Caco-2 (cell line): ENCODE measurements at regions of chr13 and their contacts with region 1.

Region 1: GRCh38 chr13:46595136-46595886 is 42.3 kb downstream of the LRCH1 start:
- DNase-seq: no peak
- H3K4me3 ChIP-seq: no peak overlapping the region
- H3K4me3 Mint-ChIP-seq: no peak overlapping the region
- H3K27ac Mint-ChIP-seq: peak overlapping the region; percentile 48
- H3K4me1 ChIP-seq: peaks cover 72% of the 10 kb centered on the region
- H3K4me1 Mint-ChIP-seq: peaks cover 64% of the 10 kb centered on the region
- H3K27me3 ChIP-seq: no peaks in the 10 kb centered on the region
- H3K27me3 Mint-ChIP-seq: no peaks in the 10 kb centered on the region
- CTCF ChIP-seq: no peak

Region 2: DNA sequence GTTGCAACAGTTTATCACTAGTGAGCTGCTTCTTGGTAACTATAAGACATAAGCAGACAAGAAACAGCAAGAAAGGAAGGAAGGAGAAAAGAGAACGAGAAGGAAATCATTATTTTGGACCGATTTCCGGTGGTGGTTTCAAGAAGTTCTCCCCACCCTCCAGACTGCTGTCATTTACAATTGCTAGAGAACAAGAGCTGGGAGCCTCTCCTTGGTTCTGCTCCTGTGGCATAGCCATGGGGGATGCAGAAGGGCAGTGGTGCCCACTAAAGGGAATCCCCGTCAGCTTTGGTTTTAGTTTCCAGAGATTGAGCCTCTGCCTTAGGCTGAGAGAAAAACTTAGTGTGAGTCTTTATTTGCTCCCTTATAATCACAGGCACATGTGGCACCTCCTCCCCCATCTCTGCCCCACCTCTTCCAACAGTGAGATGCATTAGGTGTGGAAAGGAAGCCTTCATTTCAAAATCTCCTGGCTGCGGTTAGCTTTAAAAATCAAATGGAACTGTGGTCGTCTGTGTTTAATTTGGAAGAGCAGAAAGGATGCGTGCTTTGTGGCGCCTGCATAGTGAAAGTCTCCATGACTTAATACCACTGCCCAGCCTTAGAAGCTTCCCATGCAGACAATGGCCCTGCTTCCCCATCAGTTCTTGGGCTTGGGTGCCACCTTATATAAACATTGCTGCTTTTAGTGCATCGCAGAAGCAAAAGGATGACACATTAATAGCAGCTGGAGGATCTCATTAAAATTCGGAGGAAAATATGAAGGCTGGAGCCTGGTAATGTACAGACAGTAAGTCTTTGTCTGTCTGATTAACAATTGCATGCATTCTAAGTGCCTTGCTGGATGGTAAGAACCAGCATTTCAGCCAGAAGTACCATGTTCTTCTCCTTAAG is 17.4 kb before region 1 on chr13:
- CTCF ChIA-PET with region 1: interaction called, 3 read pairs
- POLR2A ChIA-PET with region 1: interaction called, 12 read pairs
- intact Hi-C with region 1: no loop called
- DNase-seq: no peak
- H3K4me3 ChIP-seq: no peak overlapping the region
- H3K4me3 Mint-ChIP-seq: no peak overlapping the region
- H3K27ac Mint-ChIP-seq: no peak overlapping the region
- H3K4me1 ChIP-seq: peaks cover 41% of the 10 kb centered on the region
- H3K4me1 Mint-ChIP-seq: peaks cover 37% of the 10 kb centered on the region
- H3K27me3 ChIP-seq: no peaks in the 10 kb centered on the region
- H3K27me3 Mint-ChIP-seq: no peaks in the 10 kb centered on the region
- CTCF ChIP-seq: no peak